ENCODE measurements at regions of chr11 and their contacts with region 1.

Region 1: DNA sequence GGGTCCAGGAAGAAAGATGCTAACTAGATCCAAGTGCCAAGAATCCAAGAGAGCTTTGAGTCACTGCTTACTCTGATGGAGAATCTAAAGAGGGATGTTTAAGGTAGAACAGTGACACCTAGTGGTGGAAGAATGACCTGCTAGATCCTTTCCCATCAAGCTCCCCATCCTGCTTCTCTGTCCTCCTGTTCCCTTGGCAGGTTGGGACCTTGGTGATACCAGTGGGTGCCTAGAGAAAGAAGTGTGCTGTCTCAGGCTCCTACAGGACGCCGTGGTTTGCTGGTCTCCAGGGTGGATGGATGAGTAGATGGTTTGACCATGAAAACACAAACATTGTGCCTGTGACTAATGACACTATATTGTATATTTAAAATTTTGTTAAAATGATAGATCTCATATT is 383.7 kb downstream of the TMEM135 start:
- DNase-seq: peak; percentile 79
- H3K4me3 Mint-ChIP-seq: no peak overlapping the region
- H3K27ac Mint-ChIP-seq: no peak overlapping the region
- H3K4me1 Mint-ChIP-seq: no peaks in the 10 kb centered on the region
- H3K27me3 Mint-ChIP-seq: no peaks in the 10 kb centered on the region

Region 2: GRCh38 chr11:86938900-86939880 is 482.2 kb before region 1 on chr11:
- intact Hi-C with region 1: loop called (anchors 1 kb)
- DNase-seq: peak; percentile 65
- H3K4me3 Mint-ChIP-seq: no peak overlapping the region
- H3K27ac Mint-ChIP-seq: no peak overlapping the region
- H3K4me1 Mint-ChIP-seq: no peaks in the 10 kb centered on the region
- H3K27me3 Mint-ChIP-seq: peaks cover 15% of the 10 kb centered on the region

Region 3: GRCh38 chr11:87352759-87353707 is 68.4 kb before region 1 on chr11:
- intact Hi-C with region 1: loop called (anchors 1 kb)
- DNase-seq: peak; percentile 94
- H3K4me3 Mint-ChIP-seq: no peak overlapping the region
- H3K27ac Mint-ChIP-seq: no peak overlapping the region
- H3K4me1 Mint-ChIP-seq: peaks cover 12% of the 10 kb centered on the region
- H3K27me3 Mint-ChIP-seq: peaks cover 11% of the 10 kb centered on the region

Region 4: DNA sequence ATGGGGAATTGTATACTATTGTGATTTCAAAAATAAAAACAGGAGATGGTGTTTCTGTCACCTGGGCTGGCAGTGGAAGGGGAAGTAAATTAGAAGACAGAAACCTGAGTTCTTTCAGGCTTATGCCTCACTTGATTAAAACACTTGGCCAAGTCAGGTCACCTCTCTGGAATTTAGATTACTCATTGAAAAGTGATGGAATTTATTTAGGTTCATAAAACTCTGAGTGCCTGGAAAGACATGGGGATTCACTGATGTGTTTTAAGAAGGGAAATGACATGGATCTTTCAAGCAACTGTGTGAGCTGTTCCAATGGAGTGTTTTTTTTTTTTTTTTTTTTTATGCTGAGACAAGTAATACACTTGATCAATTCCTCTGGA is 16.4 kb after region 1 on chr11:
- intact Hi-C with region 1: no loop called
- DNase-seq: no peak
- H3K4me3 Mint-ChIP-seq: no peak overlapping the region
- H3K27ac Mint-ChIP-seq: no peak overlapping the region
- H3K4me1 Mint-ChIP-seq: no peaks in the 10 kb centered on the region
- H3K27me3 Mint-ChIP-seq: peaks cover 4% of the 10 kb centered on the region